Activated CD4-positive, alpha-beta T cell treated with anti-CD3 and anti-CD28 coated beads for 36 hours (primary cell): ENCODE measurements at regions of chr19 and their contacts with region 1.

Region 1: GRCh38 chr19:55258828-55259539 is at the start of gene PPP6R1:
- DNase-seq: peak; percentile 98
- ATAC-seq: peak; percentile 69
- H3K4me3 Mint-ChIP-seq: peak within 1 kb of the TSS; percentile 95
- H3K27ac Mint-ChIP-seq: peak within 1 kb of the TSS; percentile 98
- H3K4me1 Mint-ChIP-seq: peaks cover 22% of the 10 kb centered on the region
- H3K27me3 Mint-ChIP-seq: no peaks in the 10 kb centered on the region
- total RNA-seq, gene PPP6R1: 177 to 201 TPM

Region 2: GRCh38 chr19:54203151-54203611 is 1055.8 kb before region 1 on chr19:
- CTCF ChIA-PET with region 1: no interaction called
- POLR2A ChIA-PET with region 1: no interaction called
- intact Hi-C with region 1: loop called in 1 of 2 experiments (anchors 5 kb)
- DNase-seq: no peak
- ATAC-seq: no peak
- H3K4me3 Mint-ChIP-seq: peak overlapping the region; percentile 97
- H3K27ac Mint-ChIP-seq: peak overlapping the region; percentile 100
- H3K4me1 Mint-ChIP-seq: peaks cover 67% of the 10 kb centered on the region
- H3K27me3 Mint-ChIP-seq: no peaks in the 10 kb centered on the region

Region 3: GRCh38 chr19:54916822-54917221 is 342.2 kb before region 1 on chr19:
- CTCF ChIA-PET with region 1: no interaction called
- POLR2A ChIA-PET with region 1: no interaction called
- intact Hi-C with region 1: no loop called
- DNase-seq: no peak
- ATAC-seq: no peak
- H3K4me3 Mint-ChIP-seq: no peak overlapping the region
- H3K27ac Mint-ChIP-seq: no peak overlapping the region
- H3K4me1 Mint-ChIP-seq: no peaks in the 10 kb centered on the region
- H3K27me3 Mint-ChIP-seq: peaks cover 15% of the 10 kb centered on the region

Region 4: DNA sequence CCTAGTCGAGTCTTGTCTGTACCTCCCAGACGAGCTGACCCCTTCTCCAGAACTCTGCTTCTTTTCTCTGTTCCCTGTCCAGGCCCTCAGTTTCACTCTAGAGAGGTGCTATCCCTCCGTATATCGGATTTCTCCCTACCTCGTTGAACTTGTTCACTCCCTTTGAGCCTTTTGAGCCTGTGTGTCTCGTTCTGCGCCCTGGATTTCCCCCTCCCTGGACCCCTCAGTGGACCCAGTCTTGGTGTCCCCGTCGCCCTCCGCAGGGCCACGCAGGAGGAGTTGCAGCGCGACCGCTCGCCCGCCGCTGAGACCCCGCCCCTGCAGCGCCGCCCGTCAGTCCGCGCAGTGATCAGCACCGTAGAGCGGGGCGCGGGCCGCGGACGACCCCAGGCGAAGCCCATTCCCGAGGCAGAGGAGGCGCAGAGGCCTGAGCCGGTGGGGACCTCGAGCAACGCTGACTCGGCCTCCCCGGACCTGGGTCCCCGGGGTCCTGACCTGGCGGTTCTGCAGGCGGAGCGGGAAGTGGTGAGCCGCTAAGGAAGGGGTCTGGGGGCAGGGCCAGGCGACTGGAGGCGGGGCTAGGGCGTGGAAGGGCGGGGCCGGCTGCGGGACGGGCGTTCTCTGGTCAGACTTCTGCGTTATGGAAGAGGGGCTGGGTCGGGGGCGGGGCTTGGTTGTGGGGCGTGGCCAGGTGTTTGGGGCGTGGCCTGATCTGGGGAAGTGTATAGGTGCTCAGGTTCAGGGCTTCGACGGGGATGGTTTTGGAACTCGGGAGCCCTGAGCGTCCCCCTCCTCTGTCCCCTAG is 177.8 kb before region 1 on chr19:
- CTCF ChIA-PET with region 1: no interaction called
- POLR2A ChIA-PET with region 1: no interaction called
- intact Hi-C with region 1: loop called in 1 of 2 experiments (anchors 2 kb)
- DNase-seq: peak; percentile 95
- ATAC-seq: peak; percentile 71
- H3K4me3 Mint-ChIP-seq: peak overlapping the region; percentile 69
- H3K27ac Mint-ChIP-seq: peak overlapping the region; percentile 31
- H3K4me1 Mint-ChIP-seq: peaks cover 22% of the 10 kb centered on the region
- H3K27me3 Mint-ChIP-seq: peaks cover 56% of the 10 kb centered on the region

Region 5: DNA sequence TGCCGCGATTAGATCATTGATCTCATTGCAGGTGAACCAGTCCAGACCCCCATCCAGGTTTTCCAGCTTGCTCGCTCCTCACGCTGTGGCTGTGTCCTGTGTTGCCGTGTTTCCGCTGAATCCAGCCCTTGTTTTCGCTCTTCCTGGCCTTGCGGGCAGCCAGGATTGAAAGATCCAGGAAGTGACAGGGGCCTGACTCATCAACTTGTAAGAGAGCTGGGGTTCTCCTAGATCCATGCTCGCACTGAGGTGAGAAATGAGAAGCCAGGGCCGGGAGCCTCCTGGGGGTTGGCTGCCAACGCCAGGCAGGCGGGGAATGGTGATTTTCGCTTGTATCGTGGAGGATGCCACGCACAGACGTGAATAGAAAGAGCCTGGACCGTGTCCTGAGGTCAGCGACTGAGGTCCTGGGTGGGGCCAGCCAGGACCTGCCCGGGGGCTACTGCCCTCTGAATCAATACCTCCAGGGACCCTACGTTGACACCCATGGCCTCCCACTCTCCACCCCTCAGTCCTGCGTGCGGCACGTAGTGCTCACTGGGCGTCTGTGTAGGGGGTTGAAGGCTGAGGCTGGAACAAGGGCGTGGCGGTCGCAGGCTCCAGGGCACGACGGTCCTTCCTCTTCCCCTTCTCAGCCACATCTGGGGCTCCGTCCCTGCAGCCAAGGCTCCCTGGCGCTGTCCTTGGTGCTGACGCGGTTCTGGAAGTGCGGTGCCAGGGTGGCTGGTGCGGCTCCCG is 42.4 kb before region 1 on chr19:
- CTCF ChIA-PET with region 1: interaction called, 3 read pairs
- POLR2A ChIA-PET with region 1: no interaction called
- intact Hi-C with region 1: loop called (anchors 1 to 2 kb)
- DNase-seq: peak; percentile 84
- ATAC-seq: peak; percentile 90
- H3K4me3 Mint-ChIP-seq: peak overlapping the region; percentile 43
- H3K27ac Mint-ChIP-seq: no peak overlapping the region
- H3K4me1 Mint-ChIP-seq: peaks cover 15% of the 10 kb centered on the region
- H3K27me3 Mint-ChIP-seq: peaks cover 20% of the 10 kb centered on the region

Region 6: DNA sequence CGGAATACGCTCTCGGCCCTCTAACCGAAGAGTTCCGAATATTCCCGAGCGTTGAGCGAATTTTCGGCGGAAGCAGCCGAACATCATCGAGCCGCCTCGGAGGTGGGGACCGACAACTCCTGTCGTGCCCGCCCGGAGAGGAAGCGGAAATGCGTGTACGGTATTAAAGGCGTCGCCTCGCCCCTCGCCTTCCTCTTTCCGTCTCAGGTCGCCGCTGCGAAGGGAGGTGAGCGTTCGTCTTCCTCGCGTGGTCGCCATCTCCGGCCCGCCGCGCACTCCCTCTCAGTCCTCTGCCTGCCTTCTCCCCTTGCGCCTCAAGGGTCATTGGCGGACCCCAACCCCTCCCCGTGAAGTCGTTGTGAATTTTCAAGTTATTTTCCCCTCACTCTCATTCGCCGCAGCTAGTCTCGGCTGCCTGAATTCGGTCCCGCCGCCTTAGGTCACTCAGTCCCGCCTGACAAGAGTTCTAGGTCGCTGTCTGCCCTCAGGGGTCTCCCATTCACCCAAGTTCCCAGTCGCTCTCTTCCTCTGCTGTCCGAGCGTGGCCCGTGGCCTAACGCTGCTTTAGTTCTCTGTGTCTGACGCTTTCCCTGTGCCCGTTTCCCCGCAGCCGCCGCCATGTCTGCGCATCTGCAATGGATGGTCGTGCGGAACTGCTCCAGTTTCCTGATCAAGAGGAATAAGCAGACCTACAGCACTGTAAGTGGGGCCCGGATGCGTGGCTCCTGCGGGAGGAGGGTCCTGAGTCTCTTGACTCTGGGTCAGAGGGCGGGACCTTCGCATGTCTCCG is 127.0 kb after region 1 on chr19 and contains the start of gene RPL28:
- CTCF ChIA-PET with region 1: interaction called, 3 read pairs
- POLR2A ChIA-PET with region 1: interaction called, 6 read pairs
- intact Hi-C with region 1: loop called (anchors 1 to 2 kb)
- DNase-seq: peak; percentile 98
- ATAC-seq: peak; percentile 85
- H3K4me3 Mint-ChIP-seq: peak within 1 kb of the TSS; percentile 89
- H3K27ac Mint-ChIP-seq: peak within 1 kb of the TSS; percentile 98
- H3K4me1 Mint-ChIP-seq: peaks cover 51% of the 10 kb centered on the region
- H3K27me3 Mint-ChIP-seq: no peaks in the 10 kb centered on the region
- total RNA-seq, gene RPL28: 2,751 to 4,078 TPM

Region 7: DNA sequence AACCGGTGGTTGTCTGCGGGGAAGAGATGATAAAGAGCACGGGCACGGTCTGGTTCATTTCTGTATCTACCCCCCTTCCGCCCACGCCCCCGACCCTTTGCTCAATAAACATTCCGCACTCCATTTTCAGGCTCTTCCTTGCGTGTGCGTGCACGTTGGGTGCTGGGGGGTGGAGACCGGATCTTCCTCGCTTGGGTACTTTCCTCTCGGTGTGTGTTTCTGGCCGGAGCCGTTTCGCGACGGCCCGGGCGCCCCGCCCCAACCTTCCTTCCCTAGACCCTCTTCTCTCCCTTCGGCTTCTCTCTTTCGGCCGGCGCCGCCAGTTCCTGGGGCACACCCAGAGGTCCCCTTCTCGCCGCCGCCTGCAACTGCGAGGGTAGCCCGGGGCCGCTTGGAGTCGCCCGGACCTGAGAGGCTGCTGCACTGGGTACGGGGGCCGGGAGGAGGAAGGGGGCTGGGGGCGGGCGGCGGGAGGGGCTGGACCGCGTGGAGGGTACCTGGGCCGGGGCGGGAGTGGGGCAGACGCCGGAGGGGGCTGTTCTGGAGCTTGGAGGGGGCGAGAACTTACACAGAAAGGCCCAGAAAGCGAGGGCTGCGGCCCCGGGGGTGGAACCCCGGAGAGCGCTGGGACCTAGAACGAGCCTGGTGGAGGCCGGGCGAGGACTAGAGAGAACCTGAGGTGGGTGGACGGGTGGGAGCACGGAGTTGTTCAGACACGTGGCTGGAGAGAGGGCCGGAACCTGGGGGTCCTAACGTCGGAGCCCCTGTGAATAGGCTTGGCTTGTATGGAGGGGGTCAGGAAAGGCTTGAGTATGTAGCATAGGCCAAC is 384.6 kb after region 1 on chr19 and contains the start of gene ZNF581:
- CTCF ChIA-PET with region 1: no interaction called
- POLR2A ChIA-PET with region 1: interaction called, 4 read pairs
- intact Hi-C with region 1: loop called (anchors 5 kb)
- DNase-seq: peak; percentile 91
- ATAC-seq: peak; percentile 55
- H3K4me3 Mint-ChIP-seq: peak within 1 kb of the TSS; percentile 93
- H3K27ac Mint-ChIP-seq: peak within 1 kb of the TSS; percentile 99
- H3K4me1 Mint-ChIP-seq: peaks cover 44% of the 10 kb centered on the region
- H3K27me3 Mint-ChIP-seq: no peaks in the 10 kb centered on the region
- total RNA-seq, gene ZNF581: 18.9 to 26.9 TPM

Region 8: GRCh38 chr19:55801416-55801815 is 542.4 kb after region 1 on chr19:
- CTCF ChIA-PET with region 1: no interaction called
- POLR2A ChIA-PET with region 1: no interaction called
- intact Hi-C with region 1: no loop called
- DNase-seq: no peak
- ATAC-seq: no peak
- H3K4me3 Mint-ChIP-seq: no peak overlapping the region
- H3K27ac Mint-ChIP-seq: no peak overlapping the region
- H3K4me1 Mint-ChIP-seq: no peaks in the 10 kb centered on the region
- H3K27me3 Mint-ChIP-seq: peaks cover 15% of the 10 kb centered on the region

Region 9: GRCh38 chr19:56314562-56315077 is 1055.6 kb after region 1 on chr19 and contains the start of gene ZSCAN5A:
- CTCF ChIA-PET with region 1: no interaction called
- POLR2A ChIA-PET with region 1: no interaction called
- intact Hi-C with region 1: loop called in 1 of 2 experiments (anchors 10 kb)
- DNase-seq: peak; percentile 99
- ATAC-seq: peak; percentile 80
- H3K4me3 Mint-ChIP-seq: peak within 1 kb of the TSS; percentile 83
- H3K27ac Mint-ChIP-seq: peak within 1 kb of the TSS; percentile 100
- H3K4me1 Mint-ChIP-seq: peaks cover 23% of the 10 kb centered on the region
- H3K27me3 Mint-ChIP-seq: no peaks in the 10 kb centered on the region
- total RNA-seq, gene ZSCAN5A: 8.3 to 9.9 TPM